ENCODE measurements at regions of chr21 and their contacts with region 1.

Region 1: DNA sequence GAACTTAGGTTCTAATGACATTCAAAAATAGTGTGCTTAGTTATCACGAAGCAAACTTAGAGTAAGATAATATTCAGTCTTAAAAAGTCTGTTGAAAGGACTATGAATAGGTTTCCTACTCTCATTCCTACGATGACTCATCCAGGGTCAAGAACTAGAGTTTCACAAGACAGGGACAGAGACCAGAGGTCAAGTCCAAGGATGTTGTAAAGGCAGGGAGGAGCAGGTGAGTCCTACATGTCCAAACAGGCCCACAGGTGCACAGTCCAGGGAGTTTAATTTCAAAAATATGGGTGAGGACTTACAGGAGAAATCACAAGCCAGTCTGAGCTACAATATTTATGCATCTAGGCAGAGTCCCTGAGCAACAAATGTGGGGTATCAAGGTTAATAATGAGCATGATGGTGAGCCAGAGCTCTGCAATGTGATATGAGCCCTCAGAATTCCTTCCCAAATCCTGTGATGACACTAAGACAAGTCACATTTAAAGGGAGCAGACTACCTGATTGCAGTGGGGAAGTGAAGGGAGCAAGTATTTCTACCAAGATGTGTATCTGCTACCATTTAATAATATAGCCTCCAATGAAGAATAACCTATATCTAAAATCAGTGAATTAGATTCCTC is 100.0 kb upstream of the NRIP1 start:
- DNase-seq: no peak
- H3K4me3 ChIP-seq: no peak overlapping the region
- H3K27ac ChIP-seq: no peak overlapping the region
- H3K4me1 ChIP-seq: no peaks in the 10 kb centered on the region
- H3K27me3 ChIP-seq: no peaks in the 10 kb centered on the region
- CTCF ChIP-seq: no peak
- EP300 ChIP-seq: no peak
- POLR2A ChIP-seq: no peak

Region 2: DNA sequence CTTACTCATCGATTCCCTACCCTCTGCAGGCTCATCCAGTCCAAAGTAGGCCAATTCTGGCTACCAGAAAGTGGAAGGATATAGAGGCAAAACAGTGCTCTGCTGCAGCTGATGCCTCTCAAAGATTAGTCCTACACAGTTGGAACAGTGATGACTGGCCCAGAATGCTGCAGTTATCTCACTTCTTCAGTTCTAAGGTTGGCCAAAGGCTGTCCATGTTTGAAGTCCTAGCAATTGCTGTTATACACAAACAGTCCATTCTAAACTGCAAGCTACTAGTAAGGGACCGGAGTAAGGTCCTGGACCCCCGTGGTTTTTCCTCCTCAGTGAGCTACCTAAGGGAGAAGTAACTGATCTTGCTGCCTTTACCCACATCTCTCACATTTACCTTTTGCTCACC is 29.1 kb after region 1 on chr21:
- intact Hi-C with region 1: loop called in 1 of 4 experiments (anchors 1 kb)
- DNase-seq: no peak
- H3K4me3 ChIP-seq: no peak overlapping the region
- H3K27ac ChIP-seq: no peak overlapping the region
- H3K4me1 ChIP-seq: no peaks in the 10 kb centered on the region
- H3K27me3 ChIP-seq: no peaks in the 10 kb centered on the region
- CTCF ChIP-seq: no peak
- EP300 ChIP-seq: no peak
- POLR2A ChIP-seq: no peak

Region 3: DNA sequence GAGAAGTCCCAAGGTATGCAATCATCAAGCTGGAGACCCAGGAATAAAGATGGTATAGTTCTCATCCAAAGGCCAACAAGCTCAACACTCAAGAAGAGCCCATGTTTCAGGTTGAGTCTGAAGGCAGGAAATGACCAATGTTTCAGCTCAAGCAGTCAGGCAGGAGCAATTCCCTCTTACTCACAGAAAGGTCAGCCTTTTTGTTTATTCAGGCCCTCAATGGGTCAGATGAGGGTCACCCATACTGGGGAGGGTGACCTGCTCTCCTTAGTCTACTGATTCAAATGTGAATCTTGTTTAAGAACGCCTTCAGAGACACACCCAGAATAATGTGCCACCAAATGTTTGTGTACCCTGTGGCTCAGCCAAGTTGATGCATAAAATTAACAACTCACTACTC is 827.4 kb after region 1 on chr21:
- intact Hi-C with region 1: no loop called
- DNase-seq: no peak
- H3K4me3 ChIP-seq: no peak overlapping the region
- H3K27ac ChIP-seq: no peak overlapping the region
- H3K4me1 ChIP-seq: no peaks in the 10 kb centered on the region
- H3K27me3 ChIP-seq: no peaks in the 10 kb centered on the region
- CTCF ChIP-seq: no peak
- EP300 ChIP-seq: no peak
- POLR2A ChIP-seq: no peak

Measured in ovary (tissue), 10 donors.